BJ (cell line): ENCODE measurements at regions of chr5 and their contacts with region 1.

Region 1: GRCh38 chr5:149212198-149212951 is 59.3 kb upstream of the AFAP1L1 start:
- DNase-seq: peak; percentile 99
- H3K4me3 ChIP-seq: no peak overlapping the region
- H3K27me3 ChIP-seq: no peaks in the 10 kb centered on the region
- CTCF ChIP-seq: no peak

Region 2: GRCh38 chr5:149228618-149229297 is 16.4 kb after region 1 on chr5:
- CTCF ChIA-PET with region 1: interaction called, 17 read pairs
- POLR2A ChIA-PET with region 1: no interaction called
- DNase-seq: peak; percentile 52
- H3K4me3 ChIP-seq: no peak overlapping the region
- H3K27me3 ChIP-seq: no peaks in the 10 kb centered on the region
- CTCF ChIP-seq: peak; percentile 83

Region 3: DNA sequence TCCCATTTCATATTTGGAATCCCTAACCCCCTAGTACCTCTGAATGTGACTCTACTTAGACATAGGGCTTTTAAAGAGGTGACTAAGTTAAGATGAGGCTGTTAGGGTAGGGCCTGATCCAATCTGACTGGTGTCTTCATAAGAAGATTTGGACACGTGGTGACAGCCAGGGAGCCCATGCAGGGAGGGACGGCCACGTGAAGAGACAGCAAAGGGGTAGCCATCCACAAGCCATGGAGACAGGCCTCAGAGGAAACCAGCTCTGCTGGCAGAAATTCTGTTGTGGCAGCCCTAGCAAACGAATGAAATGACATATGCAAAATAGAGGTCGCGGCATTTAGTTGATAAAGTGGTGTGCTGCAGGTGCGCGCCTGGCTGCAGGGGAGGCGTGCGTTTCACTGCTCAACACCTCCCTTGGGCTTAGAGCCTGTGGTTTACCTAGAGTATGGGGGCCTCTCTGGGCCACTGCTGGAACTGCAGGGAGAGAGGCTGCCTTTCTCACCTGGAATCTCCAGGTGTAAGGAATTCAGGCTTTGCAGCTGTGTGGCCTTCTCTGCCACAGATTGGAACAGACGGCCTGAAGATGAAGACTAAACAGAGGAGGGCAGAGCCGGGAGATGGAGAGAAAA is 52.2 kb after region 1 on chr5:
- CTCF ChIA-PET with region 1: no interaction called
- POLR2A ChIA-PET with region 1: no interaction called
- DNase-seq: no peak
- H3K4me3 ChIP-seq: no peak overlapping the region
- H3K27me3 ChIP-seq: no peaks in the 10 kb centered on the region
- CTCF ChIP-seq: peak; percentile 40